H1 (cell line): ENCODE measurements at regions of chr9 and their contacts with region 1.

Region 1: GRCh38 chr9:33374634-33375213 is 27.6 kb downstream of the AQP7 start:
- DNase-seq: peak in 1 of 2 experiments; percentile 81
- H3K4me3 ChIP-seq: peak overlapping the region in 2 of 4 experiments; percentile 23 to 52; a peak in 1 of 8 replicates
- H3K27ac ChIP-seq: no peak overlapping the region
- H3K4me1 ChIP-seq: no peaks in the 10 kb centered on the region; a peak in 2 of 7 replicates
- H3K27me3 ChIP-seq: no peaks in the 10 kb centered on the region; a peak in 1 of 7 replicates
- CTCF ChIP-seq: peak; percentile 66 to 85 (median 79)
- EP300 ChIP-seq: no peak
- POLR2A ChIP-seq: no peak
- RAD21 ChIP-seq: peak; percentile 77 to 85

Region 2: DNA sequence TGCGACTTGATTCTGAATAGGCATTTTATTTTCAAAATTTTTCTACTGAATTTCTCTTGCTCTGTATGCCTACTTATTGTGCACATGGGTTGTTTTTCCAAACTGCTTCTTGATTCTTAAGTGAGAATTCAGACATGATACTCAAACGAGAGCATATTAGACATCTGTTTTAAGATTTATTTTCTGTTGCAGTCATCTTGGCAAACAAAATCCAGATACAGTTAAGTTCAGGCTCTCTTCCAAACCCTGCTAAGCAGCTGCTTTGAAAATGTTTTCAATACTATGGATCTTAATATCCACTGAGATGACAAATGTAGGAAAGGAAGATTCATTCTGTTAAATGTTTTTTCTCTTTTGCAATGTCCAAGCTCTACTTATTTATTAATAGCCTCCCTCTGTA is 586.9 kb before region 1 on chr9:
- CTCF ChIA-PET with region 1: no interaction called
- POLR2A ChIA-PET with region 1: no interaction called
- DNase-seq: no peak
- H3K4me3 ChIP-seq: no peak overlapping the region
- H3K27ac ChIP-seq: no peak overlapping the region
- H3K4me1 ChIP-seq: peaks cover 0 to 5% (median 2%) of the 10 kb centered on the region in 4 experiments; a peak in 2 of 7 replicates
- H3K27me3 ChIP-seq: peaks cover 7 to 26% (median 17%) of the 10 kb centered on the region in 4 experiments
- CTCF ChIP-seq: no peak
- EP300 ChIP-seq: no peak
- POLR2A ChIP-seq: no peak
- RAD21 ChIP-seq: no peak

Region 3: GRCh38 chr9:33364127-33364526 is 10.6 kb before region 1 on chr9:
- CTCF ChIA-PET with region 1: interaction called, 37 read pairs
- POLR2A ChIA-PET with region 1: interaction called, 4 read pairs
- DNase-seq: no peak
- H3K4me3 ChIP-seq: no peak overlapping the region
- H3K27ac ChIP-seq: no peak overlapping the region
- H3K4me1 ChIP-seq: no peaks in the 10 kb centered on the region
- H3K27me3 ChIP-seq: no peaks in the 10 kb centered on the region
- CTCF ChIP-seq: no peak
- EP300 ChIP-seq: no peak
- POLR2A ChIP-seq: no peak
- RAD21 ChIP-seq: no peak

Region 4: DNA sequence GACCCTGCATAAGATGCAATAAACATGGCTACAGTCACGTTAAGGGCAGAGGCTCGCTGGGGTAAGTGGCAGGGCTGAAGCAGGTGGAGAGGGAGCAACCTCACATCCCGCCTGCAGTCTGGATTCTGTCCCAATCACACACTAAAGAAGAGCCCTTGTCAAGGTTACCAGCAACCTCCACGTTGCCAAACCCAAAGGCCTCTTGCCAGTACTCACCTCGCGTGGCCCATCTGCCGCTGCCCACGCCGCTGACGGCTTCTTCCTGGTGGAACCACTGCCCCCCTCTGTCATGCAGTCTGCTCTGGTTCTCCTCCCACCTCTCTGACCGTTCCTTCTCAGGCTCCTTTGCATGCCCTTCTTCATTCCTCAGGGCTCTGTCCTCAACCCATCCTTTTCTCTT is 18.9 kb after region 1 on chr9:
- CTCF ChIA-PET with region 1: interaction called, 38 read pairs
- POLR2A ChIA-PET with region 1: no interaction called
- DNase-seq: no peak
- H3K4me3 ChIP-seq: no peak overlapping the region
- H3K27ac ChIP-seq: no peak overlapping the region
- H3K4me1 ChIP-seq: peaks cover 0 to 4% (median 0%) of the 10 kb centered on the region in 4 experiments; a peak in 1 of 7 replicates
- H3K27me3 ChIP-seq: no peaks in the 10 kb centered on the region
- CTCF ChIP-seq: no peak
- EP300 ChIP-seq: no peak
- POLR2A ChIP-seq: no peak
- RAD21 ChIP-seq: no peak

Region 5: GRCh38 chr9:33415501-33416038 is 40.8 kb after region 1 on chr9:
- CTCF ChIA-PET with region 1: interaction called, 85 read pairs
- POLR2A ChIA-PET with region 1: no interaction called
- DNase-seq: peak; percentile 41 to 93
- H3K4me3 ChIP-seq: no peak overlapping the region
- H3K27ac ChIP-seq: no peak overlapping the region
- H3K4me1 ChIP-seq: peaks cover 0 to 4% (median 3%) of the 10 kb centered on the region in 4 experiments; a peak in 2 of 7 replicates
- H3K27me3 ChIP-seq: no peaks in the 10 kb centered on the region; a peak in 1 of 7 replicates
- CTCF ChIP-seq: peak; percentile 75 to 82 (median 79)
- EP300 ChIP-seq: no peak
- POLR2A ChIP-seq: no peak
- RAD21 ChIP-seq: peak; percentile 63 to 79

Region 6: GRCh38 chr9:33458444-33458843 is 83.7 kb after region 1 on chr9:
- CTCF ChIA-PET with region 1: interaction called, 154 read pairs
- POLR2A ChIA-PET with region 1: interaction called, 6 read pairs
- DNase-seq: no peak
- H3K4me3 ChIP-seq: no peak overlapping the region
- H3K27ac ChIP-seq: no peak overlapping the region
- H3K4me1 ChIP-seq: 0 out of 7 replicates have a peak, but pooled peaks cover 0 to under 1% (median 0%) of the 10 kb centered on the region in 4 experiments
- H3K27me3 ChIP-seq: no peaks in the 10 kb centered on the region
- CTCF ChIP-seq: no peak
- EP300 ChIP-seq: no peak
- POLR2A ChIP-seq: no peak
- RAD21 ChIP-seq: no peak

Region 7: GRCh38 chr9:33473643-33474352 is 99.1 kb after region 1 on chr9 and contains the start of gene NOL6:
- CTCF ChIA-PET with region 1: interaction called, 153 read pairs
- POLR2A ChIA-PET with region 1: interaction called, 3 read pairs
- DNase-seq: peak; percentile 96 to 97
- H3K4me3 ChIP-seq: peak within 1 kb of the TSS; percentile 86 to 98 (median 94)
- H3K27ac ChIP-seq: no peak within 1 kb of the TSS
- H3K4me1 ChIP-seq: peaks cover 0 to 2% (median 0%) of the 10 kb centered on the region in 4 experiments; a peak in 1 of 7 replicates
- H3K27me3 ChIP-seq: no peaks in the 10 kb centered on the region
- CTCF ChIP-seq: no peak
- EP300 ChIP-seq: no peak
- POLR2A ChIP-seq: peak in 1 of 2 experiments; percentile 81; a peak in 1 of 3 replicates
- RAD21 ChIP-seq: no peak
- total RNA-seq, gene NOL6: 55.0 and 57.9 TPM in 2 replicates

Region 8: DNA sequence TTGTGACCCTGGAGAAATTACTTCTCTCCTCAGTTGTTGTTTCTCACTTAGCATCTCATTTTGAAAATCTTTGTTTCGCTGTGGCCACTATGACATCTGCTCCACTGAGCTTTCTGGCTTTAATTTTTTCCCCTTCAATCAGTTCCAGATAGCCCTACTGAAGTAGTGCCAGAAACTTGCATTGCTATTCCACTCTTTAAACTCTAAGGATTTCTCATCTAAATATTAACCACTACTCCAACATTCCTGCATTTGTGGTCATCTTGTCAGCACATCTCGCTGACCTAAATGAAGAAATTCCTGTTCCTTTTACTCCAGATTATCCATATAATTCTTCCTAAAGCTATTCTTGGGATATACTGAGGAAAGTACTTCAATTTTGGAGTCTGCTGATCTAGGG is 114.3 kb after region 1 on chr9:
- CTCF ChIA-PET with region 1: no interaction called
- POLR2A ChIA-PET with region 1: no interaction called
- DNase-seq: no peak
- H3K4me3 ChIP-seq: no peak overlapping the region
- H3K27ac ChIP-seq: no peak overlapping the region
- H3K4me1 ChIP-seq: no peaks in the 10 kb centered on the region
- H3K27me3 ChIP-seq: no peaks in the 10 kb centered on the region
- CTCF ChIP-seq: no peak
- EP300 ChIP-seq: no peak
- POLR2A ChIP-seq: no peak
- RAD21 ChIP-seq: no peak

Region 9: DNA sequence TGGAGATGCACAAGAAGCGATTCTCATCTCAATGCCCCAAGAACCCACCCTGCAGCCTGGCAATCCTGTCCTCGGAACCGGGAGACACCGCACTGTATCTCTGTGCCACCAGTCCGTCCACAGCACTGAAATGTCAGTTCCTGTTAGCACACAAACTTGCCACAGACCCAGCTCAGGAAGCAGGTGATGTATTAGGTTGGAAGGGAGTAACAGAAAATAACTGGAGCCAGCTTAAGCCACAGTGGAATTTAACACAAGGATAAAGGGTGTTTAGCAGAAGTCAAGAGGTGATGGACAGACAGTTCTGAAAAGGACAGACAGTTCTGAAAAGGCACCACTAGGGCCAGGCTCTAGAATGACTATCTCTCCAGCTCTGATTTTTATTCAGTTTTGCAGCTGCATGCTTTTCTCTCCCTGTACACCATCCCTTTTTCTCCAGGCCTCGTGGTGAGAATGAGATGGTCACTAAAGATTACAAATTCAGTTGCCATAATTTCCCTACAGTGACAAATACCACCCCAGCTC is 263.7 kb after region 1 on chr9:
- CTCF ChIA-PET with region 1: no interaction called
- POLR2A ChIA-PET with region 1: no interaction called
- DNase-seq: no peak
- H3K4me3 ChIP-seq: no peak overlapping the region
- H3K27ac ChIP-seq: no peak overlapping the region
- H3K4me1 ChIP-seq: no peaks in the 10 kb centered on the region
- H3K27me3 ChIP-seq: no peaks in the 10 kb centered on the region
- CTCF ChIP-seq: peak in 1 of 3 experiments; percentile 10; a peak in 1 of 4 replicates
- EP300 ChIP-seq: no peak
- POLR2A ChIP-seq: no peak
- RAD21 ChIP-seq: no peak

Region 10: GRCh38 chr9:33737811-33738606 is 363.3 kb after region 1 on chr9:
- CTCF ChIA-PET with region 1: no interaction called
- POLR2A ChIA-PET with region 1: no interaction called
- DNase-seq: peak in 1 of 2 experiments; percentile 65
- H3K4me3 ChIP-seq: no peak overlapping the region
- H3K27ac ChIP-seq: no peak overlapping the region
- H3K4me1 ChIP-seq: no peaks in the 10 kb centered on the region
- H3K27me3 ChIP-seq: no peaks in the 10 kb centered on the region
- CTCF ChIP-seq: peak; percentile 57 to 96 (median 83)
- EP300 ChIP-seq: no peak
- POLR2A ChIP-seq: no peak
- RAD21 ChIP-seq: peak; percentile 82 to 86